Heart left ventricle (tissue), 16 donors: ENCODE measurements at regions of chr18 and their contacts with region 1.

Region 1: DNA sequence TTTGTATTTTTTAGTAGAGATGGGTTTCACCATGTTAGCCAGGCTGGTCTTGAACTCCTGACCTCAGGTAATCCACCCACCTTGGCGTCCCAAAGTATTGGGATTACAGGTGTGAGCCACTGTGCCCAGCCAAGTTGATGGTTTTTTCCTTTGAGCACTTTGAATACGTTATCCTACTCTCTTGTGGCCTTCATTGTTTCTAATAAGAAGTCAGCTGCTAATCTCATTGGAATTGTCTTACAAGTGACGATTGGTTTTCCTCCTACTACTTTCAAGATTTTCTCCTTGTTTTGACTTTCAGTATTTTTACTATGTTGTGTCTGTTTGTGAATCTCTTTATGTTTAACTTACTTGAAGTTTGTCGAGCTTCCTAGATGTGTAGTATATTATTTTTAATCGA is 88.5 kb downstream of the TMEM200C start:
- DNase-seq: no peak
- ATAC-seq: no peak
- H3K4me3 ChIP-seq: no peak overlapping the region
- H3K27ac ChIP-seq: no peak overlapping the region
- H3K4me1 ChIP-seq: no peaks in the 10 kb centered on the region
- H3K27me3 ChIP-seq: peaks cover 0 to 7% (median 0%) of the 10 kb centered on the region in 9 donors
- CTCF ChIP-seq: no peak
- POLR2A ChIP-seq: no peak

Region 2: DNA sequence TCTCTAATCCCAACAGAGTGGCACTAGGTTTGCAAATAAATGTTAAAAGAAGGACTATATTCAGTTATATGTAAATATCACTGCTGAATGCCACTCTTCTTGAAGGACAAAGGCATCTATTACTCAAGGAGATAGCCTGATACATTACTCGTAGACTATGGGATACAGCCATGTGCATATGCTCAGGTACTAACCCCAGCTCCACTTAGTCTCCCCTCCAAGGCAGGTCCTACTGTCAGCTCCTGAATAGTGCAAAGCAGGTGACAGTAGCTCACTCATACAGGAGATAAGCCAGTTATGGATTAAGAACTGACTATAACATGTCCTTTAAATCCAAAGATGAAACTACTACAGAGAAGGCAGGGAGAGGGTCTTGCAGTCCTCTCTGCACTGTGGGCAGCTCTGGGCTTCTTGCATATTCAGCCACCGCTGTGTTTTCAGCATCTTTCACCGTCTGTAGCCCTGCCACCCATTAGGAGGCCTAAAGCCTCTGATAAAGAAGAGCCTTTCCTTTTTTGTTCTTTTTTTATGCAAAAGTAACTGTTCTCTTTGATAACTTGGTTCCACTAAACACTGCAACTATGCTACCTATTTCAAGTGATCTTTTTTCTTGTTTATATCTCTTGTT is 128.0 kb before region 1 on chr18:
- intact Hi-C with region 1: no loop called
- DNase-seq: no peak
- ATAC-seq: no peak
- H3K4me3 ChIP-seq: no peak overlapping the region
- H3K27ac ChIP-seq: no peak overlapping the region
- H3K4me1 ChIP-seq: no peaks in the 10 kb centered on the region
- H3K27me3 ChIP-seq: peaks cover 0 to 4% (median 0%) of the 10 kb centered on the region in 9 donors
- CTCF ChIP-seq: no peak
- POLR2A ChIP-seq: no peak

Region 3: GRCh38 chr18:5746844-5747243 is 60.0 kb before region 1 on chr18:
- intact Hi-C with region 1: loop called in 1 of 10 experiments (anchors 10 kb)
- DNase-seq: no peak
- ATAC-seq: no peak
- H3K4me3 ChIP-seq: no peak overlapping the region
- H3K27ac ChIP-seq: no peak overlapping the region
- H3K4me1 ChIP-seq: no peaks in the 10 kb centered on the region
- H3K27me3 ChIP-seq: peaks cover 0 to 20% (median 0%) of the 10 kb centered on the region in 9 donors
- CTCF ChIP-seq: no peak
- POLR2A ChIP-seq: no peak